Lower lobe of right lung (tissue), 2 donors: ENCODE measurements at regions of chr12 and their contacts with region 1.

Region 1: DNA sequence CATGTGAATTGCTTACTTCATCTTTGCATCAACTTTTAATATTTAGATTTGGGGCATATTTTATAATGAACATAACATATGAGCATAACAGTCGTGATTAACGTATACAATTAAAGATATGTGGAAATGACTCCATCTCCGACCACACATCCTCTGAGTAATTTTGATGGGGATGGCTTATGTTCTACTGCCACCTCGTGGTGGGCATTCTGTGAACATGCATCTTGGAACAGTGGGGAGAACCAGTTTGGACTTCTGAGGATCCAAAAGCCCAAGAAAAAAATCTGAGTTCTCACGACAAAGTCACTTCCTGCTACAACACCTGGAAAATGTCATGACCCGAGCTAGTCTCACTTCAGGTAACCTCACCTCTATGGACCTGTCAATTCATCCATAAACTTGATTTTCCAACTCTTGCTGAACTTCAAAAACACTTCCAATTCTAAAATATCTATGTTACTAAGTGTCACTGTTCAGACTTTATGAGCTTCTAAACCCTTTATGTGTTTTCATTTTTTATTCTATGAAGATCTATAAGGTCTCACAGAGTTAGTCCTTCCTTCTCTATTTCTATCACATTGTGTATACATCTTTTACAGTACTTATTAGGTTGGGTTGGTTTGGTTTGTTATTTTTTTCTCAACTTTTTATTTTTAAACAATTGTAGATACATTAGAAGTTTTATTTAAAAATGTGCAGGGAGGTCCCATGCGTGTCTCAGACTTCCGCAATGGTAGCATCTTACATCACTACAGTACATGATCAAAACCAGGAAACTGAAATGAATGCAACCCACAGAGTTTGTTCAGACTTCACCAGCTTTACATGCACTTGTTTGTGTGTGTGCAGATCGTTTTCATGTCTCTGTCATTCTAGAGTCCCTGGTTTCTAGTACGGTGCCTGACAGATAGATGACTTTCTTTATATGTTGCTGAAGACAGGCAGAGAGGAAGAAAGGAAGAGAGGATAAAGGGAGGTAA is 38.2 kb upstream of the STAB2 start:
- DNase-seq: no peak
- ATAC-seq: peak; percentile 61 to 62
- H3K4me3 ChIP-seq: no peak overlapping the region
- H3K27ac ChIP-seq: no peak overlapping the region
- H3K4me1 ChIP-seq: no peaks in the 10 kb centered on the region
- H3K27me3 ChIP-seq: no peaks in the 10 kb centered on the region
- CTCF ChIP-seq: peak; percentile 78

Region 2: DNA sequence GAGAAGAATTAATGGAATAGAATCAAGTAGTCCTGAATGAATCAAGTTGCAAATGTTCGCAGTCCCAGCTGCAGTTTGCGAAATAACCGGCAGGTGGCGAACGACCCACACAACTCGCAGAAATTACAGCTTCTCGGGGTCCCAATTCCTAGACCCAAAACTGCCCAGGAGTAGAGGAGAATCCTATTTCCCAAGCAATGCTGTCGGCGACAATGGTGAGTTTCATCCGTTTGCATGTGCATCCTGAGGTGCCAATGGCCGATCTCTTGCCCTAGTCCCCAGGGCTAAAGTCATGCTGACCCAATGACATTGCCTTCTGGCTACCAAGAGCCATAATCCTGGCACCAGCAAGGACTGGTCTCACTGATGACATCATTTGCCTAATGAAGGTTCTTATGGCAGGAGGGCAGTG is 600.0 kb before region 1 on chr12:
- intact Hi-C with region 1: loop called (anchors 10 kb)
- DNase-seq: no peak
- ATAC-seq: peak in 1 of 2 donors; percentile 38
- H3K4me3 ChIP-seq: no peak overlapping the region
- H3K27ac ChIP-seq: no peak overlapping the region
- H3K4me1 ChIP-seq: peaks cover 10% of the 10 kb centered on the region
- H3K27me3 ChIP-seq: peaks cover 44% of the 10 kb centered on the region
- CTCF ChIP-seq: peak; percentile 85